ENCODE measurements at regions of chr20 and their contacts with region 1.

Region 1: DNA sequence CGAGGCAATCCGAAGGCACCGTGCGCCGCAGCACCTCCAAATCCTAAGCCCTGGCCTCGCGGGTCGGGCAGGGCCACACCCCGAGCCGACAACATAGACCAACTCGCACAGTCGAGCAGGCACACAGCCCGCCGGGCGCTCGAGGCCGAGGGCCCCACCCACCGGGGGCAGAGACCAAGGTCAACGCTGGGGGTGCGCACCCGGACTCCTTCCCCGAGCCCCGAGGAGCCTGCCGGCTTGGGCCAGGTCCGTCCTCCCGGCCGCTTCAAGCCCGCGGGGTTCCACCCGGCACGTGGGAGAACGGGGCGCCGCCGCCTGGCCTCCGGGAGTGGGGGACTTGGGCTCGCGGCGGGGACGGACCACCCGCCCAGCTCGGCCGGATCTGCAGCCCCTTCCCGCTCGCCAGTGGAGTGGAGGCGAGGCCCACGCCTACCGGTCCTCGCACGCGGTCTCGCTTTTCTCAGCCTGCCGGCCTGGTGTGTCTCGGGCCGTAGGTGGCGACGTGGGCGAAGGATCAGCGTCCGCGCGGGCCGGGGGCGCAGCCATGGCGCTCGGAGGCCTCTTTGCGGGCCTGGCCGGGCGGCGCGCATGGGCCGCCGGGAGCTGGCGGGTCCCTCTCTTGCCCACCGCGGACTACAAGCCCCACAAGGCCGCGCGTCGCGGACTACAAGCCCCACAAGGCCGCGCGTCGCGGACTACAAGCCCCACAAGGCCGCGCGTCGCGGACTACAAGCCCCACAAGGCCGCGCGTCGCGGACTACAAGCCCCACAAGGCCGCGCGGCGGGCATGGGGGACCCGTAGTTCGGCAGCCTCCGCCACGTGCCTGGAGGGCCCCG is at the start of gene UCKL1:
- DNase-seq: peak; percentile 93 to 96 (median 95)
- ATAC-seq: peak; percentile 56 to 85 (median 82)
- H3K4me3 ChIP-seq: peak within 1 kb of the TSS; percentile 58 to 100 (median 96)
- H3K27ac ChIP-seq: peak within 1 kb of the TSS; percentile 88 to 99 (median 98)
- H3K4me1 ChIP-seq: peaks cover 0 to 63% (median 52%) of the 10 kb centered on the region in 12 donors
- H3K27me3 ChIP-seq: no peaks in the 10 kb centered on the region
- CTCF ChIP-seq: peak in 5 of 12 donors; percentile 1 to 27 (median 10)
- POLR2A ChIP-seq: peak; percentile 31 to 91
- total RNA-seq, gene UCKL1: 27.7 to 43.8 (median 37.5) TPM

Region 2: GRCh38 chr20:63537525-63538203 is 418.4 kb before region 1 on chr20:
- intact Hi-C with region 1: no loop called
- DNase-seq: peak; percentile 80 to 95 (median 87)
- ATAC-seq: peak; percentile 84 to 90 (median 87)
- H3K4me3 ChIP-seq: peak overlapping the region in 10 of 12 donors; percentile 15 to 51 (median 38)
- H3K27ac ChIP-seq: peak overlapping the region in 7 of 12 donors; percentile 12 to 91 (median 39)
- H3K4me1 ChIP-seq: peaks cover 0 to 28% (median 13%) of the 10 kb centered on the region in 12 donors
- H3K27me3 ChIP-seq: peaks cover 0 to 41% (median 2%) of the 10 kb centered on the region in 9 donors
- CTCF ChIP-seq: peak; percentile 94 to 98 (median 96)
- POLR2A ChIP-seq: no peak

Region 3: GRCh38 chr20:63574156-63574828 is 381.8 kb before region 1 on chr20 and contains the start of gene HELZ2:
- intact Hi-C with region 1: no loop called
- DNase-seq: peak; percentile 81 to 90 (median 85)
- ATAC-seq: peak; percentile 39 to 82 (median 78)
- H3K4me3 ChIP-seq: peak within 1 kb of the TSS; percentile 65 to 99 (median 86)
- H3K27ac ChIP-seq: peak within 1 kb of the TSS; percentile 54 to 96 (median 86)
- H3K4me1 ChIP-seq: peaks cover 0 to 36% (median 18%) of the 10 kb centered on the region in 12 donors
- H3K27me3 ChIP-seq: peaks cover 0 to 17% (median 0%) of the 10 kb centered on the region in 9 donors
- CTCF ChIP-seq: no peak
- POLR2A ChIP-seq: no peak
- total RNA-seq, gene HELZ2: 10.4 to 34.6 (median 20.9) TPM

Region 4: GRCh38 chr20:63911176-63911575 is 44.9 kb before region 1 on chr20:
- intact Hi-C with region 1: loop called in 1 of 10 experiments (anchors 2 kb)
- DNase-seq: no peak
- ATAC-seq: peak in 3 of 4 donors; percentile 12 to 39 (median 22)
- H3K4me3 ChIP-seq: no peak overlapping the region
- H3K27ac ChIP-seq: peak overlapping the region in 2 of 12 donors; percentile 9 to 33
- H3K4me1 ChIP-seq: peaks cover 0 to 68% (median 24%) of the 10 kb centered on the region in 12 donors
- H3K27me3 ChIP-seq: no peaks in the 10 kb centered on the region
- CTCF ChIP-seq: no peak
- POLR2A ChIP-seq: no peak

Measured in heart left ventricle (tissue), 16 donors.